ENCODE measurements at regions of chr7 and their contacts with region 1.

Region 1: GRCh38 chr7:97104719-97105238 is 12.7 kb upstream of the SDHAF3 start:
- DNase-seq: peak; percentile 46 to 77 (median 53)
- ATAC-seq: peak; percentile 21
- H3K4me3 ChIP-seq: no peak overlapping the region
- H3K4me3 Mint-ChIP-seq: no peak overlapping the region
- H3K27ac ChIP-seq: no peak overlapping the region
- H3K27ac Mint-ChIP-seq: no peak overlapping the region
- H3K4me1 ChIP-seq: no peaks in the 10 kb centered on the region
- H3K4me1 Mint-ChIP-seq: no peaks in the 10 kb centered on the region
- H3K27me3 ChIP-seq: peaks cover 0 to 6% of the 10 kb centered on the region in 2 experiments
- H3K27me3 Mint-ChIP-seq: peaks cover 37% of the 10 kb centered on the region
- CTCF ChIP-seq: peak; percentile 64

Region 2: DNA sequence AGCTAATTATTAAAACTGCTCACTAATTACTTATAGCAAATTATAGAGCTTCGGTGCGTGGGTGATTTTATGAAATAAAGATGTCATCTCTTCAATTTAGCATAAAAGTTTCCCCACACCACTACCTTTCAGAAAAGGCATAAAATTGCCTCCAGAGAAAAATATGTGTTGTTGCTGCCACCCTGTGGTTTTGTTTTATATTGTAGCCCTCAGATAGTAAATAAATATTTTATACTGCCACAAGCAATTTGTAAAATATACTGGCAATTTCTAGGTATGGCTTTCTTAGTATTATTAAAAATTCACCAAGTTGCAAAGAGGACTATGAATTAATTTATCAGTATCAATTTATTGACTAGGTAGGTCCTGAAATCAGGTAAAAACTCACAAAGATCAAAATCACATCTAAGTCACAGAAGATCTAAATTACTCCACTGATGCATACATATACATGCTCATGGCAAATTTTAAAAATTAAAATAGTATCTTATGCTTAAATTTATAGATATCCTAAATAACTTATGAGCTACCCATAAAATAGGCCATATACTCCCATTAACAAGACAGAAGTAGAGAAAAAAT is 740.9 kb after region 1 on chr7:
- CTCF ChIA-PET with region 1: no interaction called
- POLR2A ChIA-PET with region 1: interaction called, 3 read pairs
- intact Hi-C with region 1: loop called in 1 of 2 experiments (anchors 2 kb)
- DNase-seq: peak in 3 of 14 experiments; percentile 25 to 27 (median 26)
- ATAC-seq: no peak
- H3K4me3 ChIP-seq: no peak overlapping the region
- H3K4me3 Mint-ChIP-seq: no peak overlapping the region
- H3K27ac ChIP-seq: no peak overlapping the region
- H3K27ac Mint-ChIP-seq: no peak overlapping the region
- H3K4me1 ChIP-seq: no peaks in the 10 kb centered on the region
- H3K4me1 Mint-ChIP-seq: no peaks in the 10 kb centered on the region
- H3K27me3 ChIP-seq: peaks cover 0 to under 1% of the 10 kb centered on the region in 2 experiments
- H3K27me3 Mint-ChIP-seq: no peaks in the 10 kb centered on the region
- CTCF ChIP-seq: peak; percentile 59